ENCODE measurements at regions of chr1 and their contacts with region 1.

Region 1: GRCh38 chr1:205812878-205813754 is at the start of gene SLC41A1:
- DNase-seq: peak; percentile 94 to 96
- H3K4me3 ChIP-seq: peak within 1 kb of the TSS; percentile 13 to 96 (median 69)
- H3K27ac ChIP-seq: peak within 1 kb of the TSS; percentile 92 to 97 (median 96)
- H3K4me1 ChIP-seq: peaks cover 37 to 44% of the 10 kb centered on the region in 2 donors
- H3K27me3 ChIP-seq: no peaks in the 10 kb centered on the region
- CTCF ChIP-seq: no peak
- POLR2A ChIP-seq: peak; percentile 84 to 91
- total RNA-seq, gene SLC41A1: 52.1 to 98.9 (median 64.6) TPM

Region 2: GRCh38 chr1:205750138-205751035 is 62.7 kb before region 1 on chr1 and contains the start of gene NUCKS1:
- intact Hi-C with region 1: loop called (anchors 10 kb)
- DNase-seq: peak; percentile 100
- H3K4me3 ChIP-seq: peak within 1 kb of the TSS; percentile 57 to 94 (median 93)
- H3K27ac ChIP-seq: peak within 1 kb of the TSS; percentile 96 to 99 (median 98)
- H3K4me1 ChIP-seq: peaks cover 24 to 30% of the 10 kb centered on the region in 2 donors
- H3K27me3 ChIP-seq: no peaks in the 10 kb centered on the region
- CTCF ChIP-seq: peak in 1 of 6 experiments; percentile 5
- POLR2A ChIP-seq: peak in 1 of 2 donors; percentile 40
- total RNA-seq, gene NUCKS1: 122 to 237 (median 177) TPM

Region 3: GRCh38 chr1:206075786-206076755 is 263.0 kb after region 1 on chr1:
- intact Hi-C with region 1: no loop called
- DNase-seq: peak; percentile 25 to 46
- H3K4me3 ChIP-seq: no peak overlapping the region
- H3K27ac ChIP-seq: no peak overlapping the region
- H3K4me1 ChIP-seq: no peaks in the 10 kb centered on the region
- H3K27me3 ChIP-seq: no peaks in the 10 kb centered on the region
- CTCF ChIP-seq: no peak
- POLR2A ChIP-seq: no peak

Measured in thyroid gland (tissue), 4 donors.